Endothelial cell of umbilical vein (primary cell): ENCODE measurements at regions of chr7 and their contacts with region 1.

Region 1: GRCh38 chr7:98251841-98252639 is at the start of gene TECPR1:
- DNase-seq: peak; percentile 89
- H3K4me3 ChIP-seq: peak within 1 kb of the TSS; percentile 53 to 96 (median 65)
- H3K27ac ChIP-seq: peak within 1 kb of the TSS; percentile 58
- H3K4me1 ChIP-seq: peaks cover 43% of the 10 kb centered on the region
- H3K27me3 ChIP-seq: no peaks in the 10 kb centered on the region
- CTCF ChIP-seq: no peak
- POLR2A ChIP-seq: peak; percentile 35
- total RNA-seq, gene TECPR1: 84.9 and 97.5 TPM in 2 replicates

Region 2: DNA sequence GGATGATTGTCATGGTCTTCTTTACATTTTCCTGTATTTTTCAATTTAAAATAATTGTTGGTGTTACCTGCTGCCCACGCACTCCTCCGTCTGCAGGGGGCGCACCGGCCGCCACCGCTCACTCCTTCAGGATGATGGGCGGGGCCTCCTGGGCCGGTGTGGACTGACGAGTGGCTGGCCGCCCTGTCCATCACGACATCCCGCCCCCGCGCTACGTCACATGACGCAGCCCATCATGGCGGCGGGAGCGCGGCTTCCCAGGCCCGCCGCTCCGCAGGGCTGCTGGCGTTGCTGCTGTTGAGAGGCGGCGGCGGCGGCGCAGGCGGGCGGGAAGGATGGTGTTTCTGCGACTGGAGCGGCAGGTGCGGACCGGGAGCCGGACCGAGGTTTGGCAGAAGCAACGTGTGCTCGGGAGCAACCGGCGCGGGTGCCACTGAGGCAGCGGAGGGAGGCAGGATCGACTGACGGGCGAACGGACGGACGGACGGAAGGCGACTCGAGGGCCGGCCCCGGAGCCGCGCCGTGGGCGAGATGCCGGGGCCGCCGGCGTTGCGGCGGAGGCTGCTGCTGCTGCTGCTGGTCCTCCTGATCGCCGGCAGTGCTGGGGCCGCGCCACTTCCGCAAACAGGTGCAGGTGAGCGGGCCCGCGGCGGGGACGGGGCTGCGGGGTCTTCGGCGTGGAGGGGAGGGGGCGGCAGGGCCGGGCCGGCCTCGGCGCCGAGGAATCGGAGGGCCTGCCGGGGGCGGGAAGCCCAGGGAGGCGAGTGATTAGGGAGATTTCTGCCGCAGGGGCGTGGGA is 145.2 kb before region 1 on chr7 and contains the start of gene LMTK2:
- CTCF ChIA-PET with region 1: no interaction called
- POLR2A ChIA-PET with region 1: no interaction called
- dilution Hi-C with region 1: no loop called
- intact Hi-C with region 1: no loop called
- DNase-seq: peak; percentile 95
- H3K4me3 ChIP-seq: peak within 1 kb of the TSS; percentile 70 to 86 (median 80)
- H3K27ac ChIP-seq: peak within 1 kb of the TSS; percentile 68
- H3K4me1 ChIP-seq: peaks cover 32% of the 10 kb centered on the region
- H3K27me3 ChIP-seq: no peaks in the 10 kb centered on the region
- CTCF ChIP-seq: peak; percentile 87 to 96
- POLR2A ChIP-seq: peak; percentile 83
- total RNA-seq, gene LMTK2: 13.8 and 16.6 TPM in 2 replicates

Region 3: DNA sequence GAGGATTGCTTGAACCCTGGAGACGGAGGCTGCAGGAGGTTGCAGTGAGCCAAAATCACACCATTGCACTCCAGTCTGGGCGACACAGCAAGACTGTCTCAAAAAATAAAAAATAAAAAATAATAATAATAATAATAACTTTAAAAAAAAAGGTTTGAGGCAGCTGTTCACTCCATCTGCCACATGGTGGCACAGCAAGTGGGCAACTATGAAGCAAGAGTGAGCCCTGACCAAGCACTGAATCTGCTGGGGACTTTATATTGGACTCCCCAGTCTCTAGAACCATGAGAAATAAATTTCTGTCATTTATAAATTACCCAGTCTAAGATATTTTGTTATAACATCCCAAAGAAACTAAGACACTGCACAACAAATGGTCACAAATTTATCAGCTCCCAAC is 14.8 kb after region 1 on chr7:
- CTCF ChIA-PET with region 1: interaction called, 12 read pairs
- POLR2A ChIA-PET with region 1: interaction called, 3 read pairs
- dilution Hi-C with region 1: no loop called
- intact Hi-C with region 1: loop called (anchors 1 kb)
- DNase-seq: no peak
- H3K4me3 ChIP-seq: no peak overlapping the region
- H3K27ac ChIP-seq: no peak overlapping the region
- H3K4me1 ChIP-seq: peaks cover 8% of the 10 kb centered on the region
- H3K27me3 ChIP-seq: no peaks in the 10 kb centered on the region
- CTCF ChIP-seq: peak in 1 of 2 donors; percentile 43
- POLR2A ChIP-seq: no peak

Region 4: DNA sequence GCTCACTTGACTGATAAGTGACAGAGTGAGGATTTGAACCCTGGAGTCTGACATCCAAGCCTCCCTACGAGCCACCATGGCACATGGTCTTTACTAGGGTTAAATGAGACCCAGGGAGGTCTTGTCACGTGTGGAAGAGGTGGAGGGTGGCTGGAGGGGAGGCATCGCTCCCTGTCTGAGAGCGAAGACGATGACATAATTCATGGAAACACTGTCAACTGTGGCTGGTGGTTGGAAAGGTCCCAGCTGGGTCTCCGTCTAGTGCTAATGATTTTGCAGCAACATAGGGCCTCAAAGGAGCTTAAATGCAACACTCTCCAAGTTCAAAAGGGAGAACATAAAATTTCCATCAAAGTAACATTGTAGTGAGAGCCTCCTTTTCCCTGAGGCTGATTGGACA is 248.7 kb after region 1 on chr7:
- CTCF ChIA-PET with region 1: no interaction called
- POLR2A ChIA-PET with region 1: no interaction called
- dilution Hi-C with region 1: no loop called
- intact Hi-C with region 1: no loop called
- DNase-seq: no peak
- H3K4me3 ChIP-seq: no peak overlapping the region
- H3K27ac ChIP-seq: no peak overlapping the region
- H3K4me1 ChIP-seq: no peaks in the 10 kb centered on the region
- H3K27me3 ChIP-seq: no peaks in the 10 kb centered on the region
- CTCF ChIP-seq: no peak
- POLR2A ChIP-seq: no peak

Region 5: GRCh38 chr7:99325545-99326407 is 1073.7 kb after region 1 on chr7 and contains the start of gene ARPC1A:
- CTCF ChIA-PET with region 1: no interaction called
- POLR2A ChIA-PET with region 1: no interaction called
- dilution Hi-C with region 1: no loop called
- intact Hi-C with region 1: loop called (anchors 5 kb)
- DNase-seq: peak; percentile 97
- H3K4me3 ChIP-seq: peak within 1 kb of the TSS; percentile 84 to 99 (median 94)
- H3K27ac ChIP-seq: peak within 1 kb of the TSS; percentile 76
- H3K4me1 ChIP-seq: peaks cover 42% of the 10 kb centered on the region
- H3K27me3 ChIP-seq: no peaks in the 10 kb centered on the region
- CTCF ChIP-seq: peak; percentile 15 to 41
- POLR2A ChIP-seq: peak; percentile 98
- total RNA-seq, gene ARPC1A: 243 TPM in 2 replicates